Activated CD8-positive, alpha-beta T cell treated with anti-CD3 and anti-CD28 coated beads, Interleukin-2, amount 10 ng/mL, durations not matched to agents 7 days and 5 days (primary cell): ENCODE measurements at regions of chr4 and their contacts with region 1.

Region 1: GRCh38 chr4:879729-880077 is 52.4 kb downstream of the GAK start:
- DNase-seq: peak; percentile 58
- ATAC-seq: peak; percentile 73
- H3K4me3 Mint-ChIP-seq: peak overlapping the region; percentile 64
- H3K27ac Mint-ChIP-seq: peak overlapping the region; percentile 96
- H3K4me1 Mint-ChIP-seq: peaks cover 28% of the 10 kb centered on the region
- H3K27me3 Mint-ChIP-seq: no peaks in the 10 kb centered on the region

Region 2: DNA sequence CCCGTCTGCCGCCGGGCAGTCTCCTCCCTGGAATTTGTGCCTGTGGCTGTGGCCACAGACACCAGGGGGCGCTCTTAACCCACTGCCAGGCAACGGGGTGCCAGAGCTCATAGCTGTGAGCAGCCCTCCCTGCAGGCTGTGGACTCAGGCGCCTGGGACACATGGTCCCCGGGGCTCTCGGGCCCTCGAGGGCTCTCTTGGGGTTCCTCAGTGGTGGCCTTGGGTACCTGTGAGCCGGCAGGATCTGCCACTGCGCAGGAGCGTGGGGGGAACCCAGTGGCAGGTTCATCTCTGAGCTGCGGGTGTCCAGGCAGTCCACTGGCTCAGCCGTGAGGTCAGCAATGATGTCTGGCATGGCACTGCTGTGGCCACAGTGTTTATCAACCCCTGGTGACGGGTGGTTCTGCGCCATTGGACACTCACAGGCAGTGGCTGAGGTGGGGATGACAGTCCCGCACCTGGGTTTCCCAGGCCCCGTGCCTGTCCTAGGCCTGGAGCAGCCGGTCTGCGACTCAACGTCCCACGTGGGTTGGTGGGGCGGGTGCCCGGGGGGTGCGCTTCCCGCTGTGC is 136.9 kb before region 1 on chr4:
- CTCF ChIA-PET with region 1: interaction called, 10 read pairs
- POLR2A ChIA-PET with region 1: no interaction called
- DNase-seq: peak; percentile 82
- ATAC-seq: peak; percentile 90
- H3K4me3 Mint-ChIP-seq: no peak overlapping the region
- H3K27ac Mint-ChIP-seq: no peak overlapping the region
- H3K4me1 Mint-ChIP-seq: no peaks in the 10 kb centered on the region
- H3K27me3 Mint-ChIP-seq: no peaks in the 10 kb centered on the region